ENCODE measurements at regions of chr1 and their contacts with region 1.

Region 1: GRCh38 chr1:218164111-218164929 is 120.8 kb upstream of the RRP15 start:
- DNase-seq: peak; percentile 48
- ATAC-seq: peak; percentile 70 to 82

Region 2: DNA sequence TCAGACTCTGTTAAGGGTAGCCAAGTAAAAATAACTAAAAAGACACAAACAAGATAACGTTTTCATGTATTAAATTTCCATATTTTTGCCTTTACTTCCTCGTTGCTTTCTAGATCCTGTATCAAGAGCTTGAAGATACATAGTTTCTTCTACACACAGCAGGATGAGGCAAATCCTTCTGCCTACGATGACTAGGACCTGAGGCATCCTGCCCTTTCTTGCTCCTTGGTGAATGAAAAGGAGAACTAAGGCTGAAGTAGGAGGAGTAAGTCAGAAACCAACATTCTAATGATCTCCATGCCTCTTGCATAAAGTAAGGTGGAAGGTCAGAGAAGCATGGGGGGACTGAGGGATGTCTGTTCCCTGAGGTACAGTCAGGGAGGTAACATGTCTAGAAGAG is 636.0 kb before region 1 on chr1:
- intact Hi-C with region 1: loop called in 1 of 2 experiments (anchors 10 kb)
- DNase-seq: no peak
- ATAC-seq: no peak

Region 3: DNA sequence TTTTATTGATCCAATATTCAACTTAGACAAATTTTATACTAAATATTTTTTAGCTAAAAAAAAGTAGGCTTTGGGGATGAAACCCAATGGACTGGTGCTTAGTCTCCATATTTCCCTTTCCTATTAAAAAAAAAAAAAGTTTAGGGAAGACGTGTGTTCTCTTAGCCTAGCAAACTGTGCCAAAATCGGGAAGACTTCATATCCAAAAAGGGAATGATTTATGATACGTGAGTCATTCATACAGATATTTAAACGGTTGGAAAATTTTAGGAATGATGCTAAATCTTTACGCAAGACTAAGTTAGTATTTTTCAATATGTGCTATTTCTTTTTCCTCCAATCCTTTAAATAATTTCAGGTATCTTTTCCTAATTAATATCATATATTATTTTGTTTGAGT is 482.5 kb before region 1 on chr1:
- intact Hi-C with region 1: no loop called
- DNase-seq: no peak
- ATAC-seq: no peak

Region 4: DNA sequence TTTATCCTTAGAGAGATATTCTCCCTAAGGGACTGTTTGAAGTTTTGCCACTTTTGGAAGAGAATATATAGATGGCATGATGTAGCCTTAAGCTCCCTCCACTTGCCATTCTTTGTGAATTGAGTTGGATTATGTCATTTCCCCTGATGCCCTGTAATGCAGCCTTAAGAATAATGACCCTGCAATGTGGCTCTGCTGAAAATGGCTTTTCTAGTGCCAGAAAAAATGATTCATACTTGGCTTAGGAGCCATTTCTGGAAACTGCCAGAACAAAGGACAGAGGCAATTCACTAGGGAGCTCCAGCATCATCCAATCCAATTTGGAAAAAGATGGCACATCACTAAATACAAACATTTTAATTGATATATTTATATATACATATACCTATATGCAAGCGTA is 267.8 kb before region 1 on chr1:
- intact Hi-C with region 1: loop called in 1 of 2 experiments (anchors 10 kb)
- DNase-seq: no peak
- ATAC-seq: peak; percentile 53 to 79

Measured in left cardiac atrium (tissue), 4 donors.